Activated CD8-positive, alpha-beta T cell treated with anti-CD3 and anti-CD28 coated beads, Interleukin-2, amount 10 ng/mL, durations not matched to agents 7 days and 5 days (primary cell): ENCODE measurements at regions of chr14 and their contacts with region 1.

Region 1: DNA sequence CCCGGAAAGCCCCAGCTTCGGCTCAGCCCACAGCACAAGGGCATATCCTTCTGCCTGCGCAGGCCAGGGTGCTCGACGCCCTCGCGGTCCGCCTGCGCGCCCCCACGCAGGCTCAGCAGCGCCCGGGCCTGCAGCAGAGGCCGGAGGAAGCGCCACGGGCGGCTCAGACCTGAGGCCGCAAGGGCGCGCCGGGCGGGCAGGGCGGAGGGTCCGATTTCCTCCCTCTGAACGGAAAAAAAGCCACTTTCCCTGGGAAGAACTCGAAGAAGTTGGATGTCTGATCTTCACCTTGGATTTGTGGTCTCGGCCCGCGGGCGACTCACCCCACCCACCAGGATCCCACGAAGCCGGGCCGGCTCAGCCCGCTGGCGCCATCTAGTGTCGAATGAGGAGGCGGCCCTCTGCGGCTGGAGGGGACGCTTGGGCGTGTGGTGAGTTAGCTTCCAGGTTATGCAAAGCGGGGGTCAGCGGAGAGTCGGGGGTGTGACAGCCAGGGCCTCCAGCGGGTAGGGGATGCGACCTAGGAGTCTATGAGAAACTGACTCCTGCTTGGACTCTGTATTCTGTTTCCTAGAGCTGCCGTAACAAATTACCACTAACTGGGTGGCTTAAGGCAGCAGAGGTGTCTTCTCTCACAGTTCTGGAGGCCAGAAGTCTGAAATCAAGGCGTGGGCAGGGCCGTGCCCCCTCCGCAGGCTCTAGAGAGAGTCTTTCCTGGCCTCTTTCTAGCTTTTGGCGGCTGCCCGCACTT is 40.0 kb upstream of the SRSF5 start:
- DNase-seq: peak; percentile 84
- ATAC-seq: peak; percentile 95
- H3K4me3 Mint-ChIP-seq: peak overlapping the region; percentile 64
- H3K27ac Mint-ChIP-seq: peak overlapping the region; percentile 78
- H3K4me1 Mint-ChIP-seq: peaks cover 36% of the 10 kb centered on the region
- H3K27me3 Mint-ChIP-seq: peaks cover 8% of the 10 kb centered on the region

Region 2: GRCh38 chr14:69586404-69586803 is 140.5 kb before region 1 on chr14:
- CTCF ChIA-PET with region 1: interaction called, 44 read pairs
- POLR2A ChIA-PET with region 1: interaction called, 4 read pairs
- DNase-seq: no peak
- ATAC-seq: no peak
- H3K4me3 Mint-ChIP-seq: no peak overlapping the region
- H3K27ac Mint-ChIP-seq: no peak overlapping the region
- H3K4me1 Mint-ChIP-seq: peaks cover 8% of the 10 kb centered on the region
- H3K27me3 Mint-ChIP-seq: peaks cover 11% of the 10 kb centered on the region

Region 3: DNA sequence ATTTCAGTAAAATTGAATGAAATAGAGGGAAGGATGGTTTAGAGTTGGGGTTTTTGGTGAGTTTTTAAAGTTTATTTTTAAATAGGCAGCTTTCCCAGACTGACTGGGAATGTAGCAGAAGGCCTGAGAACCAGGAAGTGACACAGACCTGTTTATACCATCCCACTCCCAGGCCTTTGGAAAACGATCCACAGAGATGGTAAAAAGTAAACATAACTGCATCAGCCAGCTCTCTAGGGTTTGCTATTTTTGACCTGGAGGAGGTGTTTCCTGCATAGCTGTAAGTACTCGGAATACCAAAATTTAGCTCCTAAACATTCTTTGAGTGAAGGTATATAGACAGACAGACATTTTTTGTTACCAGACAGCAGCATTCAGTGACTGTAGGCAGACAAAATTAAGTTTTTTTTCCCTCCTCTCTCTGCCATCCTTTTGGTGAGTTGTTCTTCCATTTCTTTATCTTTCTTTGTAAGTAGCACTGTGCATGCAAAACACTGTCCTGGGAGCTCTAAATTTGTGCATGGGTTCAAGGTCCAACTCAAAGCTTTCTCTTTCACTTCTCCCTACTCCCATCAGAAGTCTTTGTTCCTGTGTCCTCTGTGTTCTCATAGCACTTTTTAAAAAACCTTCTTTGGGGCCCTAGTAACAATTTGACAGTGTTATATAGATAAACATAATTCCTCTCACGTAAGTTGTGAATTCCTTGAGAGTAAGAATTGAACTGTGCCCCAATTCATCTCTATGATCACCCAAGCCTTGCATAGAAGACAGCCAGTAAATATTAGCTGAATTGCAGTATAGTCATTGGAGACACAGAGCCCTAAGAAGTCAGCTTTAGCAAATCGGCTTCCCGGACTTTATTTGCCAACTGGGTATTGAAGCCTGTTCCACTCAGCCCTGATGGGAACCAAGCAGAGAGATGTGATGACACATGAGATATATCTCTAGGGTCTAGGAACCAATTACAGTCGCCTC is 78.2 kb before region 1 on chr14:
- CTCF ChIA-PET with region 1: interaction called, 14 read pairs
- POLR2A ChIA-PET with region 1: no interaction called
- DNase-seq: no peak
- ATAC-seq: no peak
- H3K4me3 Mint-ChIP-seq: no peak overlapping the region
- H3K27ac Mint-ChIP-seq: no peak overlapping the region
- H3K4me1 Mint-ChIP-seq: peaks cover 68% of the 10 kb centered on the region
- H3K27me3 Mint-ChIP-seq: no peaks in the 10 kb centered on the region

Region 4: DNA sequence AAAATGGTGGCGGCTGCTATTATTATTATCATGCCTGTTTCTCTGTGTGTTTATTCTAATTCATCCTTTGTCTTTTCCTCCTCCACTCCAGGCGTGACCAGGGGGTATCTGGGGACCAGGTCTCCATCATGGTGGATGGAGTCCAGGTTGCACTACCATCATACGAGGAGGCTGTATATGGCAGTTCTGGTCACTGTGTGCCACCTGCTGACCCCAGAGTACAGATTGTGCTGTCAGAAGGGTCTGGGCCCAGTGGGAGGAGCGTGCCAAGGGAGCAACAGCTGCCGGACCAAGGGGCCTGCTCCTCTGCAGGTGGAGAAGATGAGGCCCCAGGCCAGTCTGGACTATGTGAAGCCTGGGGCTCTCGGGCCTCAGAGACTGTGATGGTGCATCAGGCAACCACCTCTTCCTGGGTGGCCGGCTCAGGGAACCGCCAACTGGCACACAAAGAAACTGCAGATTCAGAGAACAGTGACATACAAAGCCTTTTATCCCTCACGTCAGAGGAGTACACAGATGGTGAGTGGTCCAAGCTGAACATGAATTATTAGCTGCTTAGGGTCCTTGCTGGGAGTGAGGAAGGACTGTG is 18.3 kb before region 1 on chr14:
- CTCF ChIA-PET with region 1: interaction called, 39 read pairs
- POLR2A ChIA-PET with region 1: no interaction called
- DNase-seq: peak; percentile 58
- ATAC-seq: peak; percentile 72
- H3K4me3 Mint-ChIP-seq: no peak overlapping the region
- H3K27ac Mint-ChIP-seq: peak overlapping the region; percentile 28
- H3K4me1 Mint-ChIP-seq: peaks cover 71% of the 10 kb centered on the region
- H3K27me3 Mint-ChIP-seq: no peaks in the 10 kb centered on the region

Region 5: GRCh38 chr14:69812714-69813113 is 85.8 kb after region 1 on chr14:
- CTCF ChIA-PET with region 1: no interaction called
- POLR2A ChIA-PET with region 1: no interaction called
- DNase-seq: no peak
- ATAC-seq: no peak
- H3K4me3 Mint-ChIP-seq: no peak overlapping the region
- H3K27ac Mint-ChIP-seq: no peak overlapping the region
- H3K4me1 Mint-ChIP-seq: no peaks in the 10 kb centered on the region
- H3K27me3 Mint-ChIP-seq: peaks cover 7% of the 10 kb centered on the region

Region 6: DNA sequence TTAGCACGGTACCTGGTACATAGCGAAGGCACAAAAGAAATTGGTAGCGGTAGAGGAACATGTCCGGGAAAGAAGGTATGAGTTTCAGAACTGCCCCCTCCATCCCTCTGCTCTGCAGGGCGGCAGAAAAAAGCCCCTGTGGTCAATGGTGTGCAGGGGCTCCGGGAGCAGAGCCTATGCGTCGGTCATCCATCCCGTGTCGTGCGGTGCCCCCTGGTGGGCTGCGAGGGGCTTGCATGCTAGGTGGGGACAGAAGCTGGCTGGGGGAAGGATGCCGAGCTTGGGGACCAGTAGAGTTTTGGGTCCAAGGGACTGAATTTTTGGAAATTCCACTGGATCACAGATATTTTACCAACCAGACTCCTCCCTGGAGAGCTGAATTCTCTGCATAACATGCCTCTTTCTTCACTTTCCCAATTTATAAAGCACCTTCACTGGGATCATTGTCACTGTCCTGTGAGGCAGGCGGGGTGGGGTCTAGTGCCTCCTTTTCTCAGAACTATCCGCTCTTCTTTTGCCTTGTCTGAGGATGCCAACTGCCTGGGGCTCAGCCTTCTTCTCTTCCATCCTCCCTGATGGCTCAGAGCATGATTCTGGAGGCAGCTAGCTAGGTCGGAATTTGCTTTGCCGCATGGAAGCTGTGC is 301.0 kb after region 1 on chr14:
- CTCF ChIA-PET with region 1: interaction called, 16 read pairs
- POLR2A ChIA-PET with region 1: no interaction called
- DNase-seq: peak; percentile 76
- ATAC-seq: peak; percentile 87
- H3K4me3 Mint-ChIP-seq: no peak overlapping the region
- H3K27ac Mint-ChIP-seq: no peak overlapping the region
- H3K4me1 Mint-ChIP-seq: no peaks in the 10 kb centered on the region
- H3K27me3 Mint-ChIP-seq: peaks cover 6% of the 10 kb centered on the region